ENCODE measurements at regions of chr16 and their contacts with region 1.

Region 1: DNA sequence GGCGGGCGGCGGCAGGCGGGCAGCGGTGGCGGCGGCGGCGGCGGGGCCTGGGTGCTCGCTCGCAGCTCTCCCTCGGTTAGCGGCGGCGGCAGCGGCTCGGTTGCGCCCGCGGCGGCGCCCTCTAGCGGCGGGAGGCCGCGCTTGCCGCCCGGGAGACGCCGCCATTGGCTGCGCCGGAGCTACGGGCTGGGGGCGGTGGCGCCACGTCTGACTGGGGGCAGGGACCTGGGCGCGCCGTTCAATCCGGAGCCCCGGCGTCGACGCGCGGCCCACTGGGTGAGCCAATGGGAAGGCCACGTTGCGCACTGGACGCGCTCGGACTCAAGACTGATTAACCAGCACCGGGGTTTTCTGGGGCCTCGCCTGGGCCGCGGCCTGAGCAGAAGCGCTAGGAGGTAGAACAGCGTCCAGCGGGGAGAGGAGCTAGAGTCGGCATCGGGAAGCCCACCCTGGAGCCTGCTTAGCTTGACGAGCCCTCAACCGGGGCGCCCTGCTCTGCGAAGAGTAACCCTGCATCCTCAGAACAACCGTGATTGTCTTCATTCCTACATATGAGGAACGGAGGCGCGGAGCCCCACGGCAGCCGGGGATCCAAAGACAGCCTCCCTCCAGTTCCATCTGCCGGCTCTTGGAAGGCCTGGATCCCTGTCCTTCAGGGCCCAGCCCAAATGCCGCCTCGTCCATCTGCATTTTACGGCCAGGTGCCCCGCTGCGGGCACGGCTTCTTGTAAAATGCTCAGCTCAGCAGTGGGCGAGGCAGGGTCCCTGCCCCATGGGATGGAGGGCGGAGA is at the start of gene ZC3H7A:
- DNase-seq: peak; percentile 93 to 95 (median 94)
- H3K4me3 ChIP-seq: peak within 1 kb of the TSS; percentile 62 to 91
- H3K4me3 Mint-ChIP-seq: peak within 1 kb of the TSS; percentile 89 to 98 (median 96)
- H3K27ac ChIP-seq: peak within 1 kb of the TSS; percentile 99
- H3K27ac Mint-ChIP-seq: peak within 1 kb of the TSS; percentile 97 to 99 (median 99)
- H3K4me1 ChIP-seq: peaks cover 66% of the 10 kb centered on the region
- H3K4me1 Mint-ChIP-seq: peaks cover 46 to 84% (median 66%) of the 10 kb centered on the region in 4 donors
- H3K27me3 ChIP-seq: no peaks in the 10 kb centered on the region
- H3K27me3 Mint-ChIP-seq: no peaks in the 10 kb centered on the region
- total RNA-seq, gene ZC3H7A: 85.0 to 92.1 TPM

Region 2: DNA sequence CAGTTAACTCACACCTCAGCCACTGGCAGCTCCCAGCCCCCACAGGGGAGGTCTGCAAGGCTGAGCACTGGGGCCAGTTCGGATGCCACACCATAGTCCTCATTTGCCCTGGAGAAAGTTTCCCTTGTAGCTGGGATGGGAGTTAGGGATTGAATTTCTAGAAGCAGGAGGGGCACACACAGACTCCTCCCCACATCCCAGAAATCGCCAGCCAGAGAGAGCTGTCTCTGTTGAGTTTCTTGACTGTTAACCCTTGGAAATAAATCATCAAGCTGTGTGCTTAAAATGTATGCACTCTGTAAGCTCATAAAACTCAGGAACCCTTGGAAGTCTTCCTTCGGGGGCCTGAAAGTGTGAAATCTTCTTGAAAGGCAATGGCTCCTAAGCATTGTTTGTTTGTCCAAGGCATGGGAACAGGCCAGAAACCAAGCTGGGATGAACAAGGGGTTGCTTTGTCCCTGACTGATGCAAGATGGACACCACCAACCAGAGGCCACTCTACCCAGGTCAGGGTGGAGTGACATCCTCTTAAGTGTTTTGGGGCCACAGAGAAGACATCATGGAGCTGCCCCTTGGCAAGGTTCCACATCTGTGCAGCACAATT is 523.5 kb before region 1 on chr16:
- CTCF ChIA-PET with region 1: no interaction called
- POLR2A ChIA-PET with region 1: no interaction called
- intact Hi-C with region 1: no loop called
- DNase-seq: no peak
- H3K4me3 ChIP-seq: no peak overlapping the region
- H3K4me3 Mint-ChIP-seq: no peak overlapping the region
- H3K27ac ChIP-seq: no peak overlapping the region
- H3K27ac Mint-ChIP-seq: peak overlapping the region in 1 of 7 donors; percentile 54
- H3K4me1 ChIP-seq: no peaks in the 10 kb centered on the region
- H3K4me1 Mint-ChIP-seq: no peaks in the 10 kb centered on the region
- H3K27me3 ChIP-seq: no peaks in the 10 kb centered on the region
- H3K27me3 Mint-ChIP-seq: no peaks in the 10 kb centered on the region

Region 3: DNA sequence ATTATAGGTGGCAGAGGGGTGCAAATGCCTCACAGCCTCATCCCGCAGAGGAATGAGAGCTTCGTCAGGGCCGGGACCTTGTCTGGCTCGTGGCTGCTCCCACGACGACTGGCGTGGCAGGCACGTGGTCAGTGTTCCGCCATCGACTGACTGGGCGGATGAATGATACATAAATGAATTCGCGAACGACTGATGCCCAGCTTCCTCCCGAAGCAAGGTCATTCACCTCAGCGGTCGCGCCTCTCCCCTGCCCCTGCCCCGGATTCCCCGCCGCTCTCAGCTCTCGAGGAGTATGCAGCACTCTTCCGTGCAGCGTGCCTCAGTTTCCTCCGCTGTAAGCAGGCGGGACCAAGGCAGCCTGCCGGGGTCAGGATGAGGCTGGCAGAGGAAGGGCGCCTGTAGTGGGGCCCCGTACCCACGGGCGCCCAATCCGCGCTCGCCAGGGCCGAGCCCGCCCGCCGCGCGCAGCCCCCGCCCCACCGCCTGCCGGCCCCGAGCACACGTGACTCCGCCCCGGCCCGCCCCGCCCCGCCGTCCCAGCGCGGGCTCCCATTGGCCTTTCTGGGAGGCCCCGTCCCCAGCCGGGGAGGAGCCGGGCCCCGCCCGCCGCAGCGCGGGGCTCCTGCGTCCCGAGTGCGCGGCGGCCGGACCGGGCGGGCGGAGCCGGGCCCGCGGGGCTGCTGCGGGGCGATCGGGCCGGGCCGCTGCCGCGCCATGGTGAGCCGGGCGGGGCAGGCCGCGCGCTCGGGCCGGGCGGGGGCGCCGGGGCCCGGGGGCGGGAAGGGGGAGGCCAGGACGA is 129.3 kb before region 1 on chr16 and contains the start of gene SNN:
- CTCF ChIA-PET with region 1: interaction called, 4 read pairs
- POLR2A ChIA-PET with region 1: interaction called, 4 read pairs
- intact Hi-C with region 1: loop called (anchors 5 kb)
- DNase-seq: peak; percentile 81 to 85 (median 83)
- H3K4me3 ChIP-seq: peak within 1 kb of the TSS; percentile 47 to 72
- H3K4me3 Mint-ChIP-seq: peak within 1 kb of the TSS; percentile 84 to 92 (median 87)
- H3K27ac ChIP-seq: peak within 1 kb of the TSS; percentile 47
- H3K27ac Mint-ChIP-seq: peak within 1 kb of the TSS; percentile 65 to 95 (median 87)
- H3K4me1 ChIP-seq: peaks cover 74% of the 10 kb centered on the region
- H3K4me1 Mint-ChIP-seq: peaks cover 51 to 80% (median 60%) of the 10 kb centered on the region in 4 donors
- H3K27me3 ChIP-seq: no peaks in the 10 kb centered on the region
- H3K27me3 Mint-ChIP-seq: no peaks in the 10 kb centered on the region
- total RNA-seq, gene SNN: 19.2 to 20.4 TPM

Region 4: GRCh38 chr16:11759997-11760396 is 37.4 kb before region 1 on chr16:
- CTCF ChIA-PET with region 1: no interaction called
- POLR2A ChIA-PET with region 1: interaction called, 3 read pairs
- intact Hi-C with region 1: loop called (anchors 5 kb)
- DNase-seq: no peak
- H3K4me3 ChIP-seq: no peak overlapping the region
- H3K4me3 Mint-ChIP-seq: no peak overlapping the region
- H3K27ac ChIP-seq: no peak overlapping the region
- H3K27ac Mint-ChIP-seq: peak overlapping the region in 4 of 7 donors; percentile 42 to 84 (median 77)
- H3K4me1 ChIP-seq: no peaks in the 10 kb centered on the region
- H3K4me1 Mint-ChIP-seq: no peaks in the 10 kb centered on the region
- H3K27me3 ChIP-seq: no peaks in the 10 kb centered on the region
- H3K27me3 Mint-ChIP-seq: no peaks in the 10 kb centered on the region

Region 5: DNA sequence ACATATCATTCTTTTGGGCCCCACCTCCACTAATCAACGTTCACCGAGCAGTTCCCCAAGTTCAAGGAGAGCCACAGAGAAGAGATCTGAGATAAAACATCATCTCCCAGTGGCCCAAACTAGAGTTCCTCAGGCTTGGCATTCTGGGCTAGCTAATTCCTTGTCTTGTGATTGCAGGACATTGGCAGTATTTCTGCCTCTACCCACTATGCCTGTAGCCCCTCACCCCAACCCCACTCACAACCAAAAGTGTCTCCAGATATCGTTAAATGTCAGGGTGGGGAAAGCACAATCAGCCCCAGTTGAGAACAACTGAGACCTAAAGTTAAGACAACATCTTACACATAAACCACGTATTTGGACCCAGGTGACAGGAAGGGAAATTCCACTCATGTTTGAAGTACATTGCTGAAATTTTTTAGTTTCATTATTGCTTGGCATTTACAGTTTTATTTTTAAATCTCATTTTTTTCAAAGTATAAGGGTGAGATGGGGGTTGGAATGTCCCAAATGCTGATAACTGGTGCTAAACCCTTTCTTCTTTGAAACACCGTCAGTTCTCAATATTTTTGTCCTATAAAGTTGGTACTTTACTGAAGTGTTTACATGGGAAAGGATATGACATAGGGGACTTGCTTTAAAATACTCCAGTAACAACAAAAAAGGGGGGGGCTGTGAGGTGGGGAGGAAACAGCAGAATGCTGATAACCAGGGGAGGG is 13.9 kb before region 1 on chr16:
- CTCF ChIA-PET with region 1: interaction called, 25 read pairs
- POLR2A ChIA-PET with region 1: interaction called, 155 read pairs
- intact Hi-C with region 1: loop called (anchors 1 kb)
- DNase-seq: peak; percentile 79 to 88 (median 84)
- H3K4me3 ChIP-seq: peak overlapping the region; percentile 58 to 87
- H3K4me3 Mint-ChIP-seq: peak overlapping the region; percentile 82 to 90 (median 86)
- H3K27ac ChIP-seq: peak overlapping the region; percentile 96
- H3K27ac Mint-ChIP-seq: peak overlapping the region; percentile 97 to 100 (median 98)
- H3K4me1 ChIP-seq: peaks cover 75% of the 10 kb centered on the region
- H3K4me1 Mint-ChIP-seq: peaks cover 42 to 66% (median 53%) of the 10 kb centered on the region in 4 donors
- H3K27me3 ChIP-seq: no peaks in the 10 kb centered on the region
- H3K27me3 Mint-ChIP-seq: no peaks in the 10 kb centered on the region

Region 6: DNA sequence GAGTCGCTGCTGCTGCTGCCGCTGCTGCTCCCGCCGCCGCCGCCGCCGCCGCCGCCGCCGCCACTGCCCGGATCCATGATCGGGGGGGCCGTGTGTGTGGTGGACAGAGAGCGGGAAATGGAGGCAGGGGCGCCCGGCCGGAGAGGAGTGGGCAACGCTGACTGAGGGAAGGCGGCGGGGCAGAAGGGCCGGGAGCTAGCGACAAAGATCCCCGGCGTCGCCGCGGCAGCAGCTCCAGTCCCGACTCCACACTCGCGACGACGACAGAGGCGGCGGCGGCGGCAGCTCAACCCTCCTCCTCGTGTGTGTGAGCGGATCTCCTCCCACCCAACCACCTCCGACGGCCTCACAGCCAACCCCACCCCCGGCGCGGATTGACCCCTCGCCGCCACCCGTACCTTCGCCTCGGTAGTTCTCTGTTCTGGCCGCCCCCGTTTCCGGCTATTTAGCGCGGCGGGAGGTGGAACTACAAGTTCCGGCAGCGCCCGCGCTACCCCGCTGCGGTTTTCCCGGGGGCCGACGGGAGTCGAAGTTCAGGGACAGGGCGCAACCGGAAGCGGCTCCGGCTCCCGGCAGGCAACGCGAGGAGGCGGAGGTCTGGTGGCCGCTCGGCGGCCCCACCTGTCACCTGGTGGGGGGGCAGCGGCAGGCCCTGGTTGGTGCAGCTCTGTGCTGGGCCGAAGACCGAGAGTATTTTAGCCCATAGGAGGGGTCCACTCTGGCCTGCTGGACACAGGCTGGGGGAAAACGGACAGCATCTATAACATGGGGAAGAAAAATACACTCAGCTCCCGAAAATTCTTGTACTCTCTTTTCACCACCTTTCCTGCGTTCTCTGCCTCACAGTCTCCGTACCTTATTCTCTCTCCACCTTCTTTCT is 118.5 kb after region 1 on chr16 and contains the start of gene GSPT1:
- CTCF ChIA-PET with region 1: no interaction called
- POLR2A ChIA-PET with region 1: interaction called, 15 read pairs
- intact Hi-C with region 1: loop called (anchors 2 kb)
- DNase-seq: peak; percentile 99 to 100 (median 99)
- H3K4me3 ChIP-seq: peak within 1 kb of the TSS; percentile 67 to 72
- H3K4me3 Mint-ChIP-seq: peak within 1 kb of the TSS; percentile 94 to 99 (median 98)
- H3K27ac ChIP-seq: peak within 1 kb of the TSS; percentile 72
- H3K27ac Mint-ChIP-seq: peak within 1 kb of the TSS; percentile 96 to 100 (median 97)
- H3K4me1 ChIP-seq: peaks cover 35% of the 10 kb centered on the region
- H3K4me1 Mint-ChIP-seq: peaks cover 24 to 45% (median 30%) of the 10 kb centered on the region in 4 donors
- H3K27me3 ChIP-seq: no peaks in the 10 kb centered on the region
- H3K27me3 Mint-ChIP-seq: peaks cover 0 to 2% of the 10 kb centered on the region in 2 donors
- total RNA-seq, gene GSPT1: 97.9 to 99.5 TPM